ENCODE measurements at regions of chr5 and their contacts with region 1.

Region 1: GRCh38 chr5:149448831-149449714 is 70.0 kb upstream of the IL17B start:
- DNase-seq: no peak
- ATAC-seq: peak; percentile 23
- H3K4me3 ChIP-seq: no peak overlapping the region
- H3K27ac ChIP-seq: peak overlapping the region; percentile 80 to 84
- H3K4me1 ChIP-seq: peaks cover 38% of the 10 kb centered on the region in 2 donors
- H3K27me3 ChIP-seq: no peaks in the 10 kb centered on the region
- CTCF ChIP-seq: peak in 1 of 2 donors; percentile 27

Region 2: GRCh38 chr5:148984333-148984732 is 464.7 kb before region 1 on chr5:
- intact Hi-C with region 1: no loop called
- DNase-seq: no peak
- ATAC-seq: peak; percentile 66
- H3K4me3 ChIP-seq: no peak overlapping the region
- H3K27ac ChIP-seq: no peak overlapping the region
- H3K4me1 ChIP-seq: no peaks in the 10 kb centered on the region
- H3K27me3 ChIP-seq: no peaks in the 10 kb centered on the region
- CTCF ChIP-seq: no peak

Region 3: DNA sequence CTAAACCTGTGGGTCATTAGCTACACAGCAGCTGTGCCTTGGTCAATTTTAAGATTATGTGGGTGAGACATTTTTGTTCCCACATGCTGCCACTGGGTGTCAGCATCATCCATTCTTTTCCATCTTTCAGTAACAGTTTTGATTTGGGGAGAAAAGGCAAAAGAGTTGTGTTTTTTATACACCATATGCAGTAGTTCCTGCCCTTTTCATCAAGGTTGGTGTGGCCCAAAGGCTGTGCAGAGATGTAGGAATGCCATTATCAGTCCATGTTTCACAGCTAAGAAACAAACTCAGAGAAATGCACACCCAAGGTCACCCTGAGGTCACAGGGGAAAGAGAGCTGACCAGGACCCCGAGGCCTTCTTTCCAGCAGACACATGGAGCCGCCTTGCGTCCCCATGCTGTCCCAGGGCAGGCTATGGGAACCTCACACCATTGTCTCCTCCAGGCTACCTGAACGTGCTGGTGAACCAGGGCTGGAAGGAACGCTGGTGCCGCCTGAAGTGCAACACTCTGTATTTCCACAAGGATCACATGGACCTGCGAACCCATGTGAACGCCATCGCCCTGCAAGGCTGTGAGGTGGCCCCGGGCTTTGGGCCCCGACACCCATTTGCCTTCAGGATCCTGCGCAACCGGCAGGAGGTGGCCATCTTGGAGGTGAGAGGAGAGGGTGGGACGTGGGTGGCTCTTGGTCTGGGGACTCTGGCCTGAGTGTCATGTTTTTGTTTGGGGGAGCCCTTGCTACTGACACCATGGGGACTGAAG is 131.6 kb before region 1 on chr5:
- intact Hi-C with region 1: no loop called
- DNase-seq: peak in 2 of 4 donors; percentile 46 to 69
- ATAC-seq: peak; percentile 64
- H3K4me3 ChIP-seq: no peak overlapping the region
- H3K27ac ChIP-seq: no peak overlapping the region
- H3K4me1 ChIP-seq: peaks cover 6 to 13% of the 10 kb centered on the region in 2 donors
- H3K27me3 ChIP-seq: no peaks in the 10 kb centered on the region
- CTCF ChIP-seq: peak; percentile 46 to 73

Region 4: DNA sequence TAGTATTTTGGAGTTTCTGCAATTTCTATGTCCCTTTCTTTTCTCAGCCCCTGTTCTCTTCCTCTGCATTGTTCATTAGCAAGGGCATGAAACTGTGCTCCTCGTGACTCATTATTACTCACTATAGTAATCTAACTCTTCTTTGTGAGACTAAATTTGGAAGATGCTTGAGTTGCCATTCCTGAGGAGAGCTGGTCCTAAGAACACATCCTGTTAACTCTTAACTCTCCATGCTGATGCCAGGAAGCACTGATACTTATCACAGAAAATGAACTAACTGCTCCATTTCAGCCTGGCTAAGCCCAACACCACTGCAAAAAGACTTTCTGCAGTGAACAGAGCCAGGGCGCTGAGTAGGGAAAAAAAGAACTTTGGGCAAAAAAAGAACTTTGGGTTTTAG is 112.8 kb after region 1 on chr5:
- intact Hi-C with region 1: loop called (anchors 5 to 10 kb)
- DNase-seq: peak in 2 of 4 donors; percentile 43 to 65
- ATAC-seq: peak; percentile 88
- H3K4me3 ChIP-seq: no peak overlapping the region
- H3K27ac ChIP-seq: peak overlapping the region; percentile 60 to 88
- H3K4me1 ChIP-seq: peaks cover 26 to 49% of the 10 kb centered on the region in 2 donors
- H3K27me3 ChIP-seq: no peaks in the 10 kb centered on the region
- CTCF ChIP-seq: no peak

Measured in left lung (tissue), 14 donors.